MCF 10A (cell line): ENCODE measurements at regions of chr2 and their contacts with region 1.

Region 1: DNA sequence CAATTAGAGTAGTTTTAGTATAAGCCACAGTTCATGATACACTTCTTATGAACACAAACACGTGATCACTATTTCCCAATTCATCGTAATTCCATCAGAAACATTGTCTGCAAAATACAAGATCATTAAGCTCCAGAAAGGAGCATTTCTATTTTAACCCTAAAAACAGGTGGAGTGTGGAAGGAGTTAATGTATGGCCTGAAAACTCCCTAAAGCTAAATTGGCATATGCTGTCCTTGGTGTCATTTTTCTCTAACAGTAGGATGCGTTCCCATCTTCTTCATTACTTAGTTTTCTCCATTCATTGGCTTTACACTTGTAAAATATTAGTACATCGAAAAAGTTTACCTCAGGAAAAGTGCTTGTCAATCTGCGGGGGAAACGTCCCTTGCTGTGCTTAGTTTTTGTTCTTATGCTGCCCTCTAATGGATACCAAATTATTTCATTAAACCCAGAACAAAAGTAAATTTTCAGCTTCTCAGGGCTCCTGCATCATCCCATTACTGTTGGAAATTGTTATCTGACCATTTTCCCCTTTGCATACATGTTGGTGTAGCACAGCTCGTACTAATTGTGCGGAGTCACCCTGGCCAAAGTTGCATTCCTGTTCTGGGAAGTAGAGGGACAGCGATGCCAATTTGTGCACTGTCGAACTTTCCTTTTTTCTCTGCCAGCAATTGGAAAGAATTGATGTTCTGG is 153.4 kb downstream of the GPD2 start:
- DNase-seq: peak; percentile 51
- H3K4me3 Mint-ChIP-seq: no peak overlapping the region
- H3K27ac Mint-ChIP-seq: no peak overlapping the region
- H3K4me1 Mint-ChIP-seq: no peaks in the 10 kb centered on the region
- H3K27me3 Mint-ChIP-seq: no peaks in the 10 kb centered on the region
- CTCF ChIP-seq: peak; percentile 60

Region 2: DNA sequence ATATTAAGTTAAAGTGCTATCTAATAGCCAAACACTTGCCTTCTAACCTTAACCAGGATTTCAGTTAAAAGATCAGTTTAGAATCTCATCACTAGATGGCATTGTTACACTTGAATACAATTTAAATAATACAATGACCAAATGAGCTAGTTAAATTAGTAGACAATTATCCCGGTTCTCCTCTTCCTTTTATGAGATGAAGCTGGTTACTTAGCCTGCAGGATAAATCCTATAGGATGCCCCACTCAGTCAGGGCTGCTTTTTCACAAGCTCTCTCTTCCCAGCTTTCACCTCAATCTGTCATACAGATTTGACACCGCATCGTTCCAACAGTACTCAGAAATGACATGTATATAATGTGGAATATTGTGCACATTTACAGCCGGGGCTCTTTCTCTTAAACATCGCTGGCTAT is 1212.3 kb before region 1 on chr2:
- CTCF ChIA-PET with region 1: interaction called, 59 read pairs
- POLR2A ChIA-PET with region 1: interaction called, 3 read pairs
- intact Hi-C with region 1: loop called (anchors 2 kb)
- DNase-seq: peak; percentile 47
- H3K4me3 Mint-ChIP-seq: no peak overlapping the region
- H3K27ac Mint-ChIP-seq: no peak overlapping the region
- H3K4me1 Mint-ChIP-seq: no peaks in the 10 kb centered on the region
- H3K27me3 Mint-ChIP-seq: no peaks in the 10 kb centered on the region
- CTCF ChIP-seq: peak; percentile 41

Region 3: DNA sequence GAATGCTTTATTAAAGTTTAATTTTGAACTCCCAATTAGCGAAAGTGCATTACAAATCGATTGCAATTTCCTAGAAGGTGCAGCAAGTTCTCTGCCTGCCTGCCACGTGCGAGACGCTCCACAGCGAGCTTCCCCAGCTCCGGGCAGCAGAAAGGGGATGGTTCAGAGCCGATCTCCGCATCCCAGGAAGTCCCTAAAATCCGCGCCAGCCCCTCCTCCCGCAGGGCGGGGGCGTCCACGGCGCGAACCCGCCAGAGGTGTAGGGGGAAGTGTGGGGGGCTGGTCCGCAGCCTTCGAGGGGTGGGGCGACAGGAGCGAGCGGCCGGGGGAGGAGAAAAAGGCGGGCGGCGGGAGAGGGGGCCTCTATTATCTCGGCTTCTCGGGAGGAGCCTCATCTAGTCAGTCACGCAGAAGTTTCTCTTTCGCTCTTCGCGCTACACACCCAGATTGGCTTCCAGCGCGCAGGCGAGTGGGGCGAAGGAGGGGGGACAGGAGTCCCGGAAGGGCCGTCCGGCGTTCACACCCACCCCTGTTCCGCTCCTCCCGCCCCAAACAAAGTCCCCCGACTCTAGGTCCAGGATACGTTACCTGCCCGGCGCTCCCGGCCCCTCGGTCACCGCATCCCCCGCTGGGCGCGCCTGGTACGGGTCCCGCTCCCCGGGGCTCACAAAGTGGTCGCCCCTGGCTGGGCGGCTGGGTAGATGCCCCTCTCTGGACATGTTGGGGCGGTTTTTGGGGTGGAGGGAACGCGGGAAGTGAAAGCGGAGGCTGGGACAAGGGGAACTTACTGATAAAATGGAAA is 247.9 kb before region 1 on chr2:
- CTCF ChIA-PET with region 1: interaction called, 66 read pairs
- POLR2A ChIA-PET with region 1: interaction called, 22 read pairs
- intact Hi-C with region 1: no loop called
- DNase-seq: peak; percentile 98
- H3K4me3 Mint-ChIP-seq: peak overlapping the region; percentile 91
- H3K27ac Mint-ChIP-seq: peak overlapping the region; percentile 98
- H3K4me1 Mint-ChIP-seq: peaks cover 16% of the 10 kb centered on the region
- H3K27me3 Mint-ChIP-seq: no peaks in the 10 kb centered on the region
- CTCF ChIP-seq: no peak

Region 4: GRCh38 chr2:156435715-156436496 is 153.6 kb before region 1 on chr2 and contains the start of gene GPD2:
- CTCF ChIA-PET with region 1: interaction called, 28 read pairs
- POLR2A ChIA-PET with region 1: interaction called, 3 read pairs
- intact Hi-C with region 1: loop called (anchors 2 kb)
- DNase-seq: peak; percentile 93
- H3K4me3 Mint-ChIP-seq: peak within 1 kb of the TSS; percentile 88
- H3K27ac Mint-ChIP-seq: peak within 1 kb of the TSS; percentile 77
- H3K4me1 Mint-ChIP-seq: peaks cover 29% of the 10 kb centered on the region
- H3K27me3 Mint-ChIP-seq: no peaks in the 10 kb centered on the region
- CTCF ChIP-seq: no peak
- total RNA-seq, gene GPD2: 37.4 and 62.5 TPM in 2 replicates

Region 5: GRCh38 chr2:156486147-156486546 is 103.4 kb before region 1 on chr2:
- CTCF ChIA-PET with region 1: no interaction called
- POLR2A ChIA-PET with region 1: no interaction called
- intact Hi-C with region 1: no loop called
- DNase-seq: peak; percentile 41
- H3K4me3 Mint-ChIP-seq: no peak overlapping the region
- H3K27ac Mint-ChIP-seq: no peak overlapping the region
- H3K4me1 Mint-ChIP-seq: peaks cover 17% of the 10 kb centered on the region
- H3K27me3 Mint-ChIP-seq: no peaks in the 10 kb centered on the region
- CTCF ChIP-seq: no peak

Region 6: GRCh38 chr2:156538083-156538504 is 51.4 kb before region 1 on chr2:
- CTCF ChIA-PET with region 1: no interaction called
- POLR2A ChIA-PET with region 1: no interaction called
- intact Hi-C with region 1: no loop called
- DNase-seq: no peak
- H3K4me3 Mint-ChIP-seq: no peak overlapping the region
- H3K27ac Mint-ChIP-seq: no peak overlapping the region
- H3K4me1 Mint-ChIP-seq: peaks cover 14% of the 10 kb centered on the region
- H3K27me3 Mint-ChIP-seq: no peaks in the 10 kb centered on the region
- CTCF ChIP-seq: no peak

Region 7: GRCh38 chr2:156892467-156893281 is 303.1 kb after region 1 on chr2:
- CTCF ChIA-PET with region 1: interaction called, 13 read pairs
- POLR2A ChIA-PET with region 1: interaction called, 3 read pairs
- intact Hi-C with region 1: loop called (anchors 2 kb)
- DNase-seq: peak; percentile 80
- H3K4me3 Mint-ChIP-seq: peak overlapping the region; percentile 69
- H3K27ac Mint-ChIP-seq: peak overlapping the region; percentile 6
- H3K4me1 Mint-ChIP-seq: peaks cover 20% of the 10 kb centered on the region
- H3K27me3 Mint-ChIP-seq: no peaks in the 10 kb centered on the region
- CTCF ChIP-seq: peak; percentile 39

Region 8: GRCh38 chr2:157194097-157194688 is 604.7 kb after region 1 on chr2:
- CTCF ChIA-PET with region 1: interaction called, 14 read pairs
- POLR2A ChIA-PET with region 1: no interaction called
- intact Hi-C with region 1: loop called (anchors 1 kb)
- DNase-seq: peak; percentile 67
- H3K4me3 Mint-ChIP-seq: no peak overlapping the region
- H3K27ac Mint-ChIP-seq: peak overlapping the region; percentile 80
- H3K4me1 Mint-ChIP-seq: peaks cover 12% of the 10 kb centered on the region
- H3K27me3 Mint-ChIP-seq: no peaks in the 10 kb centered on the region
- CTCF ChIP-seq: peak; percentile 61